Aorta (tissue), 5 donors: ENCODE measurements at regions of chr15 and their contacts with region 1.

Region 1: DNA sequence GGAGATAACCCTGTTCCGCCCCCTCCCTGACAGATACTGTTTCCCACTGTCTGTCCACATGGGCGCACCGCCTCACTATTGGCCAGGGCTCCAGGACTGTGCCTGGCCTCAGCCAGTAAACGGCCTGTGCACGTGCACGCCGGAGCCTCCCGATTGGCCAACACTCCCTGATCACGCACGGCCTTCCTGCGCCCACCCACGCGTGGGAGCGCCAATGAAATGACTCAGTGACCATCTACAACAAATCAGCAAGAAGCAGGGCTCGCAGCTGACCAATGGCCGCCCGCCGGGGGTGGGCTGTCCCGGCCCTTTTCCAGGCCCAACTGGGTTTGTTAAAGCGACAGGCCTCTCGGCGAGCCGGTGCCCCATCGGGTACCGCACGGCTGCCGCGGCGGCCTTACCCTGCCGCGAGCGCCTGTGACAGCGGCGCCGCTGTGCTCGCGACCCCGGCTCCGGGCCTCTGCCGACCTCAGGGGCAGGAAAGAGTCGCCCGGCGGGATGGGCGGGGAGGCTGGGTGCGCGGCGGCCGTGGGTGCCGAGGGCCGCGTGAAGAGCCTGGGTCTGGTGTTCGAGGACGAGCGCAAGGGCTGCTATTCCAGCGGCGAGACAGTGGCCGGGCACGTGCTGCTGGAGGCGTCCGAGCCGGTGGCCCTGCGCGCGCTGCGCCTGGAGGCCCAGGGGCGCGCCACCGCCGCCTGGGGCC is at the start of gene ARRDC4:
- DNase-seq: peak; percentile 100
- ATAC-seq: peak; percentile 100
- H3K4me3 ChIP-seq: peak within 1 kb of the TSS; percentile 51 to 69
- H3K27ac ChIP-seq: no peak within 1 kb of the TSS
- H3K4me1 ChIP-seq: peaks cover 4% of the 10 kb centered on the region in 2 donors
- H3K27me3 ChIP-seq: no peaks in the 10 kb centered on the region
- total RNA-seq, gene ARRDC4: 19.1 to 24.5 TPM

Region 2: DNA sequence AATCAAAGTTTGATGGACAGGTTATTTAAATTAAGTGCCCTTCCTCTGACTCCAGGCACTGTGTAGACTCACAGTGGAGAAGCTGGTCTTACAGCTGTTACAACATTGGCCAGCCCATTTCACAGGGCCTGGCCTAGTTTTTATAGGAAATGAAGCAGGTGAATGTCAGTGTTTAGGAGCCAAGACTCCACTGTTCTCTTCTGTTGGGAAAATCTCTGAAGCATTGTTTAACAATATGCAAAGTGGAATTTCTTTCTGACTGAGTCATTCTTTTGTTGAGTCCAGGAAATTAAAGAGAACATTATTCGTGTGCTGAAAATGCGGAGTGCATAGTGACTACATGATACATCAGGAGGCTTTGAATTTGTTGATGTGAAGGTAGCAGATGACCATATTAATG is 64.7 kb after region 1 on chr15:
- intact Hi-C with region 1: loop called in 1 of 2 experiments (anchors 10 kb)
- DNase-seq: no peak
- ATAC-seq: no peak
- H3K4me3 ChIP-seq: no peak overlapping the region
- H3K27ac ChIP-seq: no peak overlapping the region
- H3K4me1 ChIP-seq: peaks cover 4 to 6% of the 10 kb centered on the region in 2 donors
- H3K27me3 ChIP-seq: no peaks in the 10 kb centered on the region

Region 3: GRCh38 chr15:98085003-98085639 is 124.6 kb after region 1 on chr15:
- intact Hi-C with region 1: loop called in 1 of 2 experiments (anchors 10 kb)
- DNase-seq: no peak
- ATAC-seq: no peak
- H3K4me3 ChIP-seq: no peak overlapping the region
- H3K27ac ChIP-seq: no peak overlapping the region
- H3K4me1 ChIP-seq: peaks cover 0 to 1% of the 10 kb centered on the region in 2 donors
- H3K27me3 ChIP-seq: no peaks in the 10 kb centered on the region

Region 4: DNA sequence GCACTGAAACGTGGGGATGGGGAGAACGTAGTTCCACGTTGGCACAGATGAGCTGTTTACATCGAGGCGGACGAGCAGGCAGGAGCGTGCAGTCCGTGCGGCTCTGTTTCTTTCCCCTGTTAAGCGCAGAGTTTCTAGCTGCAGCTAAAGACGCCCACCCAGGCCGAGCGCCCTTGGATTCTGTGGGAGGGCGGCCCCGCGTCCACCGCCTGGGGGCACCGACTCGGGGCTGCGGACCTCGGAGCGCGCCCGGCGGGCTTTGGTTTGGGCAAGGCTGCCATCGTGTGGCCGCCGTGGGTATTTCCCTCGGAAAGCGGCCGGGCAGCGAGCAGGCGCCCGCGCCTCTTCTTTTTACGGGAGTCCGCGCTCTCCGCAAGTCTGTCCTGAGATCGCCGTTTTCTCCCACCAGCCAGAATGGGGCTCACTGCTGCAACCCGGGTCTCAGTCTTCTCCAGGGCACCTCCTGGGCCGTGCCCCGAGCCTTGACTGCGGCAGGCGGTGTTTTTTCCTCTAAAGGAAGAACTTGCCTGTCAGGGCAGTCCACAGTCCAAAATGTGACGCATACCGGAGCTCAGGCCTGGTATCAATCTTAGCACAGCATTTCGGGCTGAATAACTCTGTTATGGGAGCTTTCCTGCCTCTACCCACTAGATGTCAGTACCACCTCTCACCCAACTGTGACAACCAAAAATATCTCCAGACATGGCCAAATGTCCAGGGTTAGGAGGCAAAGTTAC is 467.9 kb after region 1 on chr15:
- intact Hi-C with region 1: loop called in 1 of 2 experiments (anchors 10 kb)
- DNase-seq: peak; percentile 76 to 93
- ATAC-seq: peak; percentile 93
- H3K4me3 ChIP-seq: peak overlapping the region in 1 of 2 donors; percentile 36
- H3K27ac ChIP-seq: peak overlapping the region in 1 of 2 donors; percentile 82
- H3K4me1 ChIP-seq: no peaks in the 10 kb centered on the region
- H3K27me3 ChIP-seq: no peaks in the 10 kb centered on the region